ENCODE measurements at regions of chr3 and their contacts with region 1.

Region 1: GRCh38 chr3:115819785-115820384 is 196.6 kb downstream of the GAP43 start:
- DNase-seq: peak; percentile 87
- H3K4me3 ChIP-seq: no peak overlapping the region
- H3K27ac ChIP-seq: no peak overlapping the region
- H3K4me1 ChIP-seq: no peaks in the 10 kb centered on the region
- H3K27me3 ChIP-seq: peaks cover 3 to 6% of the 10 kb centered on the region in 2 experiments
- CTCF ChIP-seq: peak; percentile 86 to 93
- POLR2A ChIP-seq: no peak

Region 2: DNA sequence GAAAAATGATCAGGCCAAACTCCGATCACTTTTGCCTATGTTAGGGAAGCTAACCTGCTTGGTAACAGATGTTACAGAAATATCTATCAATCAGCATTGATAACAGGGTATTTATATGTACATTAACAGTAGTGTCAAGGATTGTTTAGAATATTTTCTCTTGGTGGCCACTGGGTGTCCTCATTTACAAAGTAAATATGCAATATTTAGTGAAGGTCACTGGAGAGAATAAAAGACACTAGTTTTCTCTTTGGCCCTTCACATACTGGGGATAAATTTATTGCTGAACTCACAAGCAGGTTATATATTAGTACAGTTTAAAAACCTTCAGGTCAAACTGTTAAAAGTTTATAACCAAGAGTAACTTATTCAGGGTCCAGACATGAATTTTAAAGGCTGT is 1457.1 kb before region 1 on chr3:
- CTCF ChIA-PET with region 1: interaction called, 4 read pairs
- POLR2A ChIA-PET with region 1: no interaction called
- dilution Hi-C with region 1: no loop called
- intact Hi-C with region 1: loop called (anchors 10 kb)
- DNase-seq: peak; percentile 29
- H3K4me3 ChIP-seq: no peak overlapping the region
- H3K27ac ChIP-seq: no peak overlapping the region
- H3K4me1 ChIP-seq: no peaks in the 10 kb centered on the region
- H3K27me3 ChIP-seq: no peaks in the 10 kb centered on the region
- CTCF ChIP-seq: peak; percentile 2 to 18
- POLR2A ChIP-seq: no peak

Region 3: GRCh38 chr3:115448851-115449250 is 371.0 kb before region 1 on chr3:
- CTCF ChIA-PET with region 1: no interaction called
- POLR2A ChIA-PET with region 1: no interaction called
- dilution Hi-C with region 1: no loop called
- intact Hi-C with region 1: no loop called
- DNase-seq: no peak
- H3K4me3 ChIP-seq: no peak overlapping the region
- H3K27ac ChIP-seq: no peak overlapping the region
- H3K4me1 ChIP-seq: peaks cover 4% of the 10 kb centered on the region
- H3K27me3 ChIP-seq: no peaks in the 10 kb centered on the region
- CTCF ChIP-seq: no peak
- POLR2A ChIP-seq: no peak

Region 4: DNA sequence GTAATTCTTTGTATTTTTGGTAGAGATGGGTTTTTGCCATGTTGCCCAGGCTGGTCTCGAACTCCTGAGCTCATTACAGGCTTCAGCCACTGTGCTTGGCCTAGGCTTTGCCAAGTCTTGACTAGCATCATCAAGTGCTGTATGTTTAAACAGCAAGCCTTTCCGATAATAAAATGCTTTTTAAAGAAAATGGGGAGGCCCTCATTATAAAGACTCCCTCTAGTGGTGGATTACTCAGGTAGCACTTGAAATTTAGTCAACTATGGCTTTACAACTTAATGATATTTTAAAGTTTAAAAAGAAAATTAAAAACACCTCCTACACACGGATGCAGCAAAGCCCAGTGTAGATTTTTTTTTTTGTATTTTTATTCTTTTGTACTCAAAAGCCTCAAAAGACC is 17.1 kb after region 1 on chr3:
- CTCF ChIA-PET with region 1: interaction called, 17 read pairs
- POLR2A ChIA-PET with region 1: interaction called, 3 read pairs
- dilution Hi-C with region 1: no loop called
- intact Hi-C with region 1: no loop called
- DNase-seq: peak; percentile 17
- H3K4me3 ChIP-seq: no peak overlapping the region
- H3K27ac ChIP-seq: no peak overlapping the region
- H3K4me1 ChIP-seq: no peaks in the 10 kb centered on the region
- H3K27me3 ChIP-seq: peaks cover 0 to 2% of the 10 kb centered on the region in 2 experiments
- CTCF ChIP-seq: peak; percentile 30 to 55
- POLR2A ChIP-seq: no peak